Right ventricle myocardium superior (tissue), 1 donor: ENCODE measurements at regions of chr5 and their contacts with region 1.

Region 1: GRCh38 chr5:115586601-115587048 is 15.7 kb downstream of the TICAM2 start:
- DNase-seq: no peak
- ATAC-seq: peak; percentile 41

Region 2: GRCh38 chr5:115309751-115310370 is 276.8 kb before region 1 on chr5:
- intact Hi-C with region 1: loop called (anchors 5 kb)
- DNase-seq: no peak
- ATAC-seq: peak; percentile 66